Activated B cell treated with CpG ODN at 0.5 μM for 24 hours (primary cell): ENCODE measurements at regions of chr4 and their contacts with region 1.

Region 1: GRCh38 chr4:89294573-89295269 is 12.9 kb downstream of the GPRIN3 start:
- DNase-seq: no peak
- ATAC-seq: peak; percentile 33
- H3K4me3 Mint-ChIP-seq: no peak overlapping the region
- H3K27ac Mint-ChIP-seq: no peak overlapping the region
- H3K4me1 Mint-ChIP-seq: peaks cover 64% of the 10 kb centered on the region
- H3K27me3 Mint-ChIP-seq: peaks cover 7% of the 10 kb centered on the region
- CTCF ChIP-seq: no peak

Region 2: DNA sequence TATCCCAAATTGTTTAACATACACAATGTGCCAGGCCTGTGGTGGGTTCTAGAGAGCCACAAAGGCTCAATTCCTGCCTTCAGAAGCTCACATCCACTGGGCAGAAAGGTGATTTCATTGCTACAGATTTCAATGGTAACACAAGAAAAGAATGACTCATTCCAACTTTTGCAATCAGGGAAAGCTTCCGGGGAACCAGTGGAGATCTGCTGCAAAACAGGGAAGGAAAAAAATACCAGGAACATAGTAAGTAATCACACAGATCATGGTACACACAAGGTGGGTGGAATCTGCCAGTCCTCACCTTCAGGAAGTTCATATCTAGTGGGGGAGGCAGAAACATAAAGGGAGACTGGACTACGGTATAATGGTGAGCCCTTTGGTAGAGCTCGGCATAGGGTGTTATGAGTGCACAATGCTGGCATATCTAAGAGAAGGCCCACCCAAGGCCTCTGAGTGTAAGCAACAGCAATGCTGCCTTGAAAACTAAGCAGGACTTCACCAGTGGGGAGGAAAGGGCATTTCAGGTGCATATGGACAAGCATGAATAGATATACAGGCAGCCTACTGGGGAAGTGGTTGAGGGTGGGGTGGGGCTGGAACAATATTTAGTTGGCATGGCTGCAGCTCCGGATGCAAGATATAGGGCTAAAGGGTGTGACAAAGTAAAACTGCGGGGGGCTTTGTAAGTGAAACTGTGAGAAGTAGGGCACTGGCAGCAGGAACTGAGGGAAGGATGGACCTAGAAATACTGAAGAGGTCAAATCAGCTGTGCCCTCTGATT is 11.3 kb before region 1 on chr4:
- CTCF ChIA-PET with region 1: interaction called, 3 read pairs
- POLR2A ChIA-PET with region 1: interaction called, 3 read pairs
- intact Hi-C with region 1: loop called (anchors 2 kb)
- DNase-seq: no peak
- ATAC-seq: peak; percentile 70
- H3K4me3 Mint-ChIP-seq: peak overlapping the region; percentile 25
- H3K27ac Mint-ChIP-seq: peak overlapping the region; percentile 19
- H3K4me1 Mint-ChIP-seq: peaks cover 30% of the 10 kb centered on the region
- H3K27me3 Mint-ChIP-seq: peaks cover 2% of the 10 kb centered on the region
- CTCF ChIP-seq: no peak

Region 3: DNA sequence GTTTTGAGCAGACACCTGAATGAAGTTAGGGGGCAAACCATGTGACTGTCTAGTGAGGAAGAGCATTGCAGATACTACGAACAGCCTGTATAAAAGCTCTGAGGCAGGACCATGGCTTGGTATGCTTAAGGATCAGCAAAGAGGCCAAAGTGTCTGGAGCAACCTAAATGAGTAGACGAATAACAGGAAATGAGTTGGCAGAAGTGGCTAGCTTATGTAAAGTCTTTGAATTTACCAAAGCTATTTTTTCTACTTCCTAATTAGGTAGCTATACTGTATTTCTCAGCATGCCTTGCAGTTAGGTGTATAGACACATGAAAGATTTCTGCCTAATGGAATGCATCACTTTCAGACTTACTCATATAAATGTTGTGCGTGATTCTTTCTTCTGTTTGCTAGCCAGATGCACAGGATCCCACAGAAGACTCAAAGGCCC is 22.2 kb after region 1 on chr4:
- CTCF ChIA-PET with region 1: no interaction called
- POLR2A ChIA-PET with region 1: interaction called, 3 read pairs
- intact Hi-C with region 1: loop called (anchors 1 kb)
- DNase-seq: no peak
- ATAC-seq: peak; percentile 76
- H3K4me3 Mint-ChIP-seq: peak overlapping the region; percentile 59
- H3K27ac Mint-ChIP-seq: peak overlapping the region; percentile 74
- H3K4me1 Mint-ChIP-seq: peaks cover 34% of the 10 kb centered on the region
- H3K27me3 Mint-ChIP-seq: no peaks in the 10 kb centered on the region
- CTCF ChIP-seq: no peak

Region 4: GRCh38 chr4:89434364-89434988 is 139.8 kb after region 1 on chr4:
- CTCF ChIA-PET with region 1: no interaction called
- POLR2A ChIA-PET with region 1: no interaction called
- intact Hi-C with region 1: loop called (anchors 2 kb)
- DNase-seq: no peak
- ATAC-seq: peak; percentile 54
- H3K4me3 Mint-ChIP-seq: no peak overlapping the region
- H3K27ac Mint-ChIP-seq: no peak overlapping the region
- H3K4me1 Mint-ChIP-seq: peaks cover 7% of the 10 kb centered on the region
- H3K27me3 Mint-ChIP-seq: no peaks in the 10 kb centered on the region
- CTCF ChIP-seq: no peak